ENCODE measurements at regions of chr5 and their contacts with region 1.

Region 1: DNA sequence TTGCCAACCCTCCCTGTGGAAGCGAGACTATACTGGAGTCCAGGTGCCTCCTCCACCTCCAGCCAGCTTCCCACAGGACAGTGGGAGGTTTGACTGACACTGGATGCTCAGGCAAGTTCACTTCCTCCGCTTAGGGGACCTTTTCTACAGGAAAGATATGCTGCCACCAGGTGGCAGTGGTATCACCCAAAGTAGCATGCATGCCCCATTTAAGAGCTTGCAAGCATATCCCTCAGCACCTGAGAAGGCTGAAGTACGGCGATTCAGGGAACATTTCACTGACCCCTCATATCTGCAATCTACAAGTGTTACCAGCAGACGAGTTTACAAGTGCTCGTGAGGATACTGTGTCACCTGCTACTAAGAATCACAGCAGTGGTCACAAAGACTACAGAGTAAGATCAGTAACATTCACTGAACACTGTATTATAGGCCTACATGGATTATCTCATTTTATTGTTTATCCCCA is 75.5 kb downstream of the KLHL3 start:
- DNase-seq: peak; percentile 85
- ATAC-seq: peak; percentile 96
- H3K4me3 Mint-ChIP-seq: no peak overlapping the region
- H3K27ac Mint-ChIP-seq: no peak overlapping the region
- H3K4me1 Mint-ChIP-seq: peaks cover 19% of the 10 kb centered on the region
- H3K27me3 Mint-ChIP-seq: no peaks in the 10 kb centered on the region

Region 2: GRCh38 chr5:137431051-137431450 is 229.3 kb before region 1 on chr5:
- CTCF ChIA-PET with region 1: no interaction called
- POLR2A ChIA-PET with region 1: no interaction called
- intact Hi-C with region 1: no loop called
- DNase-seq: no peak
- ATAC-seq: no peak
- H3K4me3 Mint-ChIP-seq: no peak overlapping the region
- H3K27ac Mint-ChIP-seq: no peak overlapping the region
- H3K4me1 Mint-ChIP-seq: no peaks in the 10 kb centered on the region
- H3K27me3 Mint-ChIP-seq: peaks cover 5% of the 10 kb centered on the region

Region 3: DNA sequence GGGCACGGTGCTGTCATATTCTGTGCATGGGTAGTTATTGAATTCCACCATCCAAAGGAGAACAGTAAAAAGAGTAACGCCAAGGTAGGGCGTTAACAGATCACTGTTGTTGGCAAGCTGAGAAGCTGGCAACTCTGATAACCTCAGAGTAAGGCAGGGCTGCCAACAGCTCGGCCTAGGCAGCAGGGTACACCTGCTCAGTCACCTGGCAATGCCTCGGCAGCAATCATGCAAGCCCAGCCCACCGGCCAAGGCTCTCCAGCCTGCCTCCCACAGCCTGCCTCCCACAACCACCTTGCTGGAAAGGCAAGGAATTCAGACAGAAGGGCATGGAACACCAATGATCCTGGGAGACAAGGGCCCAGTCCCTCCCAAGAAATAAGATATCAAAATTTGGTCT is 11.6 kb after region 1 on chr5:
- CTCF ChIA-PET with region 1: interaction called, 29 read pairs
- POLR2A ChIA-PET with region 1: no interaction called
- intact Hi-C with region 1: no loop called
- DNase-seq: no peak
- ATAC-seq: no peak
- H3K4me3 Mint-ChIP-seq: no peak overlapping the region
- H3K27ac Mint-ChIP-seq: no peak overlapping the region
- H3K4me1 Mint-ChIP-seq: peaks cover 4% of the 10 kb centered on the region
- H3K27me3 Mint-ChIP-seq: no peaks in the 10 kb centered on the region

Region 4: GRCh38 chr5:137695651-137696428 is 35.5 kb after region 1 on chr5:
- CTCF ChIA-PET with region 1: interaction called, 11 read pairs
- POLR2A ChIA-PET with region 1: no interaction called
- intact Hi-C with region 1: loop called (anchors 1 to 5 kb)
- DNase-seq: peak; percentile 42
- ATAC-seq: peak; percentile 75
- H3K4me3 Mint-ChIP-seq: peak overlapping the region; percentile 40
- H3K27ac Mint-ChIP-seq: peak overlapping the region; percentile 89
- H3K4me1 Mint-ChIP-seq: peaks cover 51% of the 10 kb centered on the region
- H3K27me3 Mint-ChIP-seq: no peaks in the 10 kb centered on the region

Region 5: DNA sequence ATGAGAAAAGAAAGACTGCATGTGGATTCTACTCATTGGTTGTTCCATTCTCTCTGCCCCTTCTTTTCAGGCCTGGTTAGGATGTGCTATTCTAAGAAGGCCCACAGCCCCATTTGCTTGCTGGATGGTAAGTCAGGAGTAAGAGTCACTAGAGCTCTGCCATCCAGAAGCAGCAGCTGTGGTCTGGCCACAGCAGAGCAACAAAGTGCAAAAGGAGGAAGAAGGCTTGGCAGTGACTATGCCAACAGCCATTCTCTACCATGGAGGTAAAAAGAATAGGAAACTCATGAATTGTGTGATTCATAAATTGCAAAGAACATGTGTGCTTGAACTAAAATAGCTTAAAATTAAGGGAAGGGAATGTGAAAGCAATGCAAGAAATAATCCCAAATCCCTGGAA is 54.6 kb after region 1 on chr5:
- CTCF ChIA-PET with region 1: interaction called, 16 read pairs
- POLR2A ChIA-PET with region 1: no interaction called
- intact Hi-C with region 1: no loop called
- DNase-seq: no peak
- ATAC-seq: no peak
- H3K4me3 Mint-ChIP-seq: no peak overlapping the region
- H3K27ac Mint-ChIP-seq: no peak overlapping the region
- H3K4me1 Mint-ChIP-seq: no peaks in the 10 kb centered on the region
- H3K27me3 Mint-ChIP-seq: no peaks in the 10 kb centered on the region

Region 6: DNA sequence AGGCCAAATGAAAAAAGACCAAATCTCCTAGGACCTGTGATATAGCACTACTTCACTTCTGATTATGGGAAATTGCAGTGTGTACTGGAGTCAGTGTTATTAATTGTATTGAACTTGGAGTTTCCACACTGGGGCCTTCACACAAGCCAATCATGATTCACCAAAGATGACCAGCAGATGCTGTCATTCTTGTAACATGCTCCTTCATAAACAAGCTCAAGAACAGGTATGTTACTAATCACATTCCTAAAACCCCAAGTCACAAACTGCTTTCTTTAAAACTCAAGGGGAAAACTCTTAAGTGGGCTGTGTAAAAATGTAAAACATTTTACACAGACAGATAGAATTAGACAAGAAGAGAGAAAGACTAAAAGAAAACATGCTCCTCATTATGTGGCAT is 70.0 kb after region 1 on chr5:
- CTCF ChIA-PET with region 1: interaction called, 31 read pairs
- POLR2A ChIA-PET with region 1: no interaction called
- intact Hi-C with region 1: no loop called
- DNase-seq: no peak
- ATAC-seq: no peak
- H3K4me3 Mint-ChIP-seq: no peak overlapping the region
- H3K27ac Mint-ChIP-seq: no peak overlapping the region
- H3K4me1 Mint-ChIP-seq: peaks cover 9% of the 10 kb centered on the region
- H3K27me3 Mint-ChIP-seq: no peaks in the 10 kb centered on the region

Region 7: GRCh38 chr5:137735555-137736284 is 75.3 kb after region 1 on chr5 and contains the start of gene KLHL3:
- CTCF ChIA-PET with region 1: interaction called, 290 read pairs
- POLR2A ChIA-PET with region 1: interaction called, 6 read pairs
- intact Hi-C with region 1: no loop called
- DNase-seq: peak; percentile 71
- ATAC-seq: peak; percentile 49
- H3K4me3 Mint-ChIP-seq: no peak within 1 kb of the TSS
- H3K27ac Mint-ChIP-seq: no peak within 1 kb of the TSS
- H3K4me1 Mint-ChIP-seq: peaks cover 18% of the 10 kb centered on the region
- H3K27me3 Mint-ChIP-seq: no peaks in the 10 kb centered on the region
- total RNA-seq, gene KLHL3: 6.8 to 10.8 TPM

Region 8: DNA sequence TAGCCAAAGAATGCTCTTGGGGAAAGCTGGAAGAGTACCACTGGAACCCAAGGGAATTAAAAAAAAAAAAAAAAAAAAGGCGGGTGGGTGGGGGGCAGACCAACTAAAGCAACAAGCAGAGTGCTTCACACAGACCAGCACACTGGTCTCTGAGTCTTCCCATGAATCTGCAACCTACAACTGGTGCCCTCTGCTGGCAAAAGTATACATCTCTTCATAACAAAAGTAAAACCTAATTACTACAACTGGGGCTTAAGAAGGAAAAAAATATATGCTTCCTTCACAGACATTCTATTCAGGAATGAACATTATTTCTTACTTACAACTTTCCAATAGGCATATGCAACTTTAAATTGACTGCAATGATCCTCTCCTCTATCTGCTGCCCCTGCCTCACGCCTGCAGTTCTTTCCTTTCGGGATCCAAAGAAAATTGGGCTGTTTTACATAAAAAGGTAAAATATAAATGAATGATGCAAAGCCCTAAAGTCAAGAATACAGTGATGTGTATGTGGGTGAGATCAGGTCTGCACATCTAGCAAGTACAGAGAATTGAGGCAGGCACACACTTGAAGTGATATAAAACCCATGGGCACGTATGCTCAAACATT is 82.8 kb after region 1 on chr5:
- CTCF ChIA-PET with region 1: interaction called, 290 read pairs
- POLR2A ChIA-PET with region 1: interaction called, 6 read pairs
- intact Hi-C with region 1: loop called (anchors 1 kb)
- DNase-seq: peak; percentile 75
- ATAC-seq: peak; percentile 91
- H3K4me3 Mint-ChIP-seq: no peak overlapping the region
- H3K27ac Mint-ChIP-seq: no peak overlapping the region
- H3K4me1 Mint-ChIP-seq: peaks cover 16% of the 10 kb centered on the region
- H3K27me3 Mint-ChIP-seq: no peaks in the 10 kb centered on the region